ENCODE measurements at regions of chr19 and their contacts with region 1.

Region 1: GRCh38 chr19:10870955-10871603 is at the start of gene CARM1:
- DNase-seq: peak; percentile 97 to 99 (median 99)
- ATAC-seq: peak; percentile 87
- H3K4me3 ChIP-seq: peak within 1 kb of the TSS; percentile 59 to 62
- H3K4me3 Mint-ChIP-seq: peak within 1 kb of the TSS; percentile 89
- H3K27ac ChIP-seq: peak within 1 kb of the TSS; percentile 37 to 76
- H3K27ac Mint-ChIP-seq: peak within 1 kb of the TSS; percentile 84
- H3K4me1 ChIP-seq: peaks cover 17% of the 10 kb centered on the region
- H3K4me1 Mint-ChIP-seq: peaks cover 19% of the 10 kb centered on the region
- H3K27me3 ChIP-seq: no peaks in the 10 kb centered on the region
- H3K27me3 Mint-ChIP-seq: no peaks in the 10 kb centered on the region
- CTCF ChIP-seq: no peak
- total RNA-seq, gene CARM1: 18.1 to 21.3 TPM

Region 2: GRCh38 chr19:10602330-10603083 is 268.6 kb before region 1 on chr19:
- CTCF ChIA-PET with region 1: no interaction called
- POLR2A ChIA-PET with region 1: no interaction called
- intact Hi-C with region 1: loop called in 1 of 2 experiments (anchors 2 kb)
- DNase-seq: peak; percentile 79 to 94 (median 86)
- ATAC-seq: peak; percentile 82
- H3K4me3 ChIP-seq: peak overlapping the region; percentile 91 to 99
- H3K4me3 Mint-ChIP-seq: peak overlapping the region; percentile 96
- H3K27ac ChIP-seq: peak overlapping the region; percentile 99 to 100
- H3K27ac Mint-ChIP-seq: peak overlapping the region; percentile 99
- H3K4me1 ChIP-seq: peaks cover 38% of the 10 kb centered on the region
- H3K4me1 Mint-ChIP-seq: peaks cover 29% of the 10 kb centered on the region
- H3K27me3 ChIP-seq: no peaks in the 10 kb centered on the region
- H3K27me3 Mint-ChIP-seq: no peaks in the 10 kb centered on the region
- CTCF ChIP-seq: no peak

Region 3: DNA sequence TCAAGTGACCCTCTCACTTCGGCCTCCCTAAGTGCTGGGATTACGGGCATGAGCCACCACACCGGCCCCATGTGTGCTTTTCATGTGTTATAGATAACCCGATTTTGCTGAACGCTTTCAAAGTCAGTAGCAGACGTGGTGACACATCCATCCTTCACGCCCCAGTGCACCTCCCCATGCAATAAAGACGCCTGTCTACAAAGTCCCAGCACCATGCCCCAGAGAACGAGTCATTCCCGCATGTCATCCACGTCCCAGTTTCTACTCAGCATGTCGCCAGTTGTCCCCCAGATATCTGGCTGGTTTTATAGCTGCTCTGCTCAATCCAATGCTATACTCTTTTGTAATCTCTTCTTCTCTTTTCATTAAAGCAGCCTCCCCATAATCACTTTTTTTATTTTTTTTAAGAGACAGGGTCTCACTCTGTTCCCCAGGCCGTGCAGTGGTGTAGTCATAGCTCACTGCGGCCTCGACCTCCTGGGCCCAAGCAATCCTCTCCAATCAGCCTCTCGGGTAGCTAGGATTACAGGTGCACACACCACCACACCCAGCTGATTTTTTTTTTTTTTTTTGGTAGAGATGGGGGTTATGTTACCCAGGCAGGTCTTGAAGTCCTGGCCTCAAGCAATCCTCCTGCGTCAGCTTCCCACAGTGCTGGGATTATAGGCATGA is 110.7 kb before region 1 on chr19:
- CTCF ChIA-PET with region 1: interaction called, 3 read pairs
- POLR2A ChIA-PET with region 1: no interaction called
- intact Hi-C with region 1: loop called in 1 of 2 experiments (anchors 1 kb)
- DNase-seq: peak in 5 of 9 experiments; percentile 36 to 67 (median 54)
- ATAC-seq: peak; percentile 30
- H3K4me3 ChIP-seq: peak overlapping the region in 1 of 2 experiments; percentile 39
- H3K4me3 Mint-ChIP-seq: peak overlapping the region; percentile 66
- H3K27ac ChIP-seq: peak overlapping the region; percentile 43 to 74
- H3K27ac Mint-ChIP-seq: peak overlapping the region; percentile 95
- H3K4me1 ChIP-seq: peaks cover 81% of the 10 kb centered on the region
- H3K4me1 Mint-ChIP-seq: peaks cover 82% of the 10 kb centered on the region
- H3K27me3 ChIP-seq: no peaks in the 10 kb centered on the region
- H3K27me3 Mint-ChIP-seq: no peaks in the 10 kb centered on the region
- CTCF ChIP-seq: no peak

Region 4: GRCh38 chr19:10928525-10929401 is 57.7 kb after region 1 on chr19 and contains the starts of genes TIMM29 and YIPF2:
- CTCF ChIA-PET with region 1: interaction called, 3 read pairs
- POLR2A ChIA-PET with region 1: no interaction called
- intact Hi-C with region 1: loop called in 1 of 2 experiments (anchors 1 kb)
- DNase-seq: peak; percentile 86 to 97 (median 94)
- ATAC-seq: peak; percentile 88
- H3K4me3 ChIP-seq: peak within 1 kb of the TSS; percentile 73 to 86
- H3K4me3 Mint-ChIP-seq: peak within 1 kb of the TSS; percentile 95
- H3K27ac ChIP-seq: peak within 1 kb of the TSS; percentile 63 to 78
- H3K27ac Mint-ChIP-seq: peak within 1 kb of the TSS; percentile 91
- H3K4me1 ChIP-seq: peaks cover 17% of the 10 kb centered on the region
- H3K4me1 Mint-ChIP-seq: peaks cover 31% of the 10 kb centered on the region
- H3K27me3 ChIP-seq: no peaks in the 10 kb centered on the region
- H3K27me3 Mint-ChIP-seq: no peaks in the 10 kb centered on the region
- CTCF ChIP-seq: no peak
- total RNA-seq, gene TIMM29: 27.9 TPM
- total RNA-seq, gene YIPF2: 25.9 to 27.6 TPM

Region 5: GRCh38 chr19:11090054-11090900 is 219.2 kb after region 1 on chr19:
- CTCF ChIA-PET with region 1: no interaction called
- POLR2A ChIA-PET with region 1: no interaction called
- intact Hi-C with region 1: loop called in 1 of 2 experiments (anchors 5 kb)
- DNase-seq: peak; percentile 95 to 98 (median 98)
- ATAC-seq: peak; percentile 84
- H3K4me3 ChIP-seq: peak overlapping the region; percentile 78 to 93
- H3K4me3 Mint-ChIP-seq: peak overlapping the region; percentile 86
- H3K27ac ChIP-seq: peak overlapping the region; percentile 97 to 99
- H3K27ac Mint-ChIP-seq: peak overlapping the region; percentile 96
- H3K4me1 ChIP-seq: peaks cover 44% of the 10 kb centered on the region
- H3K4me1 Mint-ChIP-seq: peaks cover 47% of the 10 kb centered on the region
- H3K27me3 ChIP-seq: no peaks in the 10 kb centered on the region
- H3K27me3 Mint-ChIP-seq: no peaks in the 10 kb centered on the region
- CTCF ChIP-seq: no peak

Measured in CD8-positive, alpha-beta T cell (primary cell).